Ovary (tissue), 10 donors: ENCODE measurements at regions of chr12 and their contacts with region 1.

Region 1: DNA sequence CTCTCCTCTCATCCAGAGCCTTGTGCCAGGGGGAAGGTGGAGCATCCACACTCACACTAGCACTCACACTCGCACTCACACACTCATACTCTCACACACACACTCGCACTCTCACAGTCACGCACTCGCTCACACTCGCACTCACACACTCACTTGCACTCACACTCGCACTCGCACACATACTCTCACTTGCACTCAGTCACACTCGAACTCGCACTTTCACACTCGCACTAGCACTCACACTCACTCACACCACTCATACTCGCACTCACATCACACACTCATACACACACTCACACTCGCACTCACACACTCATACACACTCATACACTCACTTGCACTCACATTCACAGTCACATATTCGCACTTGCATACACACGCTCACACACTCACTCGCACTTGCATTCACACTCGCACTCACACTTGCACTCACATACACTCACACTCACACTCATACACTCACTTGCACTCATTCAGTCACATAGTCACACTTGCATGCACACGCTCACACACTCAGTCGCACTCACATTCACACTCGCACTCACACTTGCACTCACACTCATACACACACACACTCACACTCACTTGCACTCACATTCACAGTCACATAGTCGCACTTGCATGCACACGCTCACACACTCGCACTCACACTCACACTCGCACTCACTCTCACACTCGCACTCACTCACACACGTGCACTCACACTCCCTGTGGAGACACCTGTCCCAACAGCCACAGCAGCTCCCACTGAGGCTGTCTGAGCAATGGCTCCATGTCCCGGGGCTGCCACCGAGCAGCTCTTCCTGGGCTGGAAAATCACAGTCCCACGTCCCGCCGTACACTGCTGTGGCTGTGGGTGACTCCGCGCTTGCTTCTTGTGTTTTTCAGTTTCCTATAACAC is 12.3 kb upstream of the RIMBP2 start:
- DNase-seq: no peak
- H3K4me3 ChIP-seq: no peak overlapping the region
- H3K27ac ChIP-seq: no peak overlapping the region
- H3K4me1 ChIP-seq: no peaks in the 10 kb centered on the region
- H3K27me3 ChIP-seq: no peaks in the 10 kb centered on the region
- CTCF ChIP-seq: no peak
- EP300 ChIP-seq: no peak
- POLR2A ChIP-seq: no peak

Region 2: DNA sequence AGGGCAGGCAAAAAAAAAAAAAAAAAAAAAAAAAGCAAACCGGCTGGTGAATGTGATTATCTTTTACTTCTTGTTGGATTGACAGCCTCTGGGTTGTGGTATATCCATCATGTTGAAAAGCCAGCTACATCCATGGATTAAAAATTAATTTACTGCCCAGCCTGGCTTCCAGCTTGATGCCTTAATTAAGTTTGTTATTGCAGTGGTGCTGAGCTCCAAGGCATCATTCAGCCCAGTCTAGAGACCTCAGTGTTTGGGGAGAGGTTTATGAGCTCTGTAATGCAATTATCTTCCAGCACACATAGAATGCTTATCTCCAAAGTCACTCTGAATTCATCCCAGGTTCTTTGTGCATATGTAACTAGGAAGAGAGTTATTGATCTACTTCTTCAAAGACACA is 127.1 kb before region 1 on chr12:
- intact Hi-C with region 1: no loop called
- DNase-seq: no peak
- H3K4me3 ChIP-seq: no peak overlapping the region
- H3K27ac ChIP-seq: no peak overlapping the region
- H3K4me1 ChIP-seq: no peaks in the 10 kb centered on the region
- H3K27me3 ChIP-seq: no peaks in the 10 kb centered on the region
- CTCF ChIP-seq: no peak
- EP300 ChIP-seq: no peak
- POLR2A ChIP-seq: no peak

Region 3: DNA sequence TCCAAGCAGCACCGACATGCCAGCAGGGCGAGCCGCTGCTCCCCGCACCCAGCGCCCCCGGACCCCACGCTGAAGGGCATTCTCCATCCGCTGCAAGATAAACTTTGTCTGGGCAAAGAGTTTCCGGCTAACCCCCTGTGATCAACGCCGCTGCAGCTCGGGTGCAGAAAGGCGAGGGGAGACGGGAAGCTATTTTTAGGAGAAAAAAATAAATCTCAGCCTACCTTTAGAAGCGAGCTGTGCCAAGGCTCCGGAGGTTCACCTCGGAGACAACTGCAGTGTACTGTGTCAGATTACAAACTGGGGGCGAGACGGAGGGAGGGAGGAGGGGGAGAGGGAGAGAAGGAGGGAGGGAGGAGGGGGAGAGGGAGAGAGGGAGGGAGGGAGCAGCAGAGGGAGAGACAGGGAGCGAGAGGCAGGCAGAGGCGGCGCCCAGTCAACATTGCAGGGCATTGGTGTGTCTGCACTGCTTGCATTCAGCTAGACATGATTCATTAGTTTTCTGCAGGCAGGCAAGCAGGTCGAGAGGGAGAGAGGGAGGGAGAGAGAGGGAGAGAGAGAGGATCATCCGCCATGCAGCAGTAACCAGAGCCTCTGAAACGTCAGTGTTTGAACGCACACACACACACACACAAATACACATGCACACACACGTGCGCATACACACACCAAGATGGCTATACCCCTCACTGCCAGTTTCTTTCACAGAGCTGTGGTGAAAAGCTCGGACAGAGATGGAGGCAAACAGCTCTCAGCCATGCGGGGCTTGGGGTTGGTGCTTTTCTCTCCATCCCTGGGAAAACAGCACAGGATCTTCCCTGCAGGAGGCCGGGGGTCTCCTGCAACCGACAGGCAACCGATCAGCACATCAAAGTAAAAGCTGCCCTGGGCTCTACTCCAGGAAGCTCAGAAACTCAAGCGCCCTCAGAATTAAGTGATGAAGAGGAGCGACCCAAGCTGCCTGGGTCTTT is 12.1 kb before region 1 on chr12 and contains the start of gene RIMBP2:
- intact Hi-C with region 1: loop called in 1 of 4 experiments (anchors 1 kb)
- DNase-seq: peak in 4 of 5 donors; percentile 33 to 50 (median 38)
- H3K4me3 ChIP-seq: peak within 1 kb of the TSS; percentile 46
- H3K27ac ChIP-seq: no peak within 1 kb of the TSS
- H3K4me1 ChIP-seq: no peaks in the 10 kb centered on the region
- H3K27me3 ChIP-seq: no peaks in the 10 kb centered on the region
- CTCF ChIP-seq: no peak
- EP300 ChIP-seq: no peak
- POLR2A ChIP-seq: no peak
- total RNA-seq, gene RIMBP2: 1.1 to 16.2 (median 4.3) TPM